Natural killer cell (primary cell): ENCODE measurements at regions of chr11 and their contacts with region 1.

Region 1: DNA sequence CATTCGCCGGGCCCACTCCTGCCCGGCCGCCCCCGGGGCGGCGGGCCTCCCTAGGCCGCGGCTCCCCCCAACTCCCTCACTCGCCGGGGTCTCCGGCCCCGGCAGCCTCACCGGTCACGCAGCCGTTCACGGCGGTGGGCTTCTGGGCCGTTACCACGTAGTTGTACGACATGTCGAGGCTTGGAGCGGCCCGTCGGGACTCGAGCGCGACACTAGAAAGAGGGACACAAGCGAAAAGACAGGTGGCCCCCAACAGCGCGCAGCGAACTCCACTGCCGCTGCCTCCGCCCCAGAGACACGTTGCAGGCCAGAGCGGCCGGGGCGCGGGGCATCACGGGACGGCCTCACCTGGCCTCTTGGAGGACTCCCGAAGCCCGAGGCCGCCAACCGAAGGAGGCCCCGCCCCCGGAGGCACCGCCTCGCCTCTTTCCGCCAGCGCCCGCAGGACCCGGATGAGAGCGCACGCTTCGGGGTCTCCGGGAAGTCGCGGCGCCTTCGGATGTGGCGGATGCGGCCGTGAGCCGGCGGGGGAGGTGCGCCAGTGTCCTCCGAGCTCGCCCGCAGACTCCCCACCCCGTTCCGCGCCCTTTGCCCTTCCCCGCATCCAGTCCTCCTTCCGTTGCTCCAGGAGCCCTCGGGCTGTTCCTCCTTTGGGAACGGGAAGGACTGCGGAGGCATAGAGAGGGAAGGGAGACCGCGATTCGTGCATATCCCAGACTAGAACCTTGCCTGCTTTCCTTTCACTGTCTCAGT is at the starts of genes DDB1 and TKFC:
- DNase-seq: peak; percentile 92 to 97
- ATAC-seq: peak; percentile 90 to 95 (median 94)
- H3K4me3 ChIP-seq: peak within 1 kb of the TSS; percentile 71
- H3K4me3 Mint-ChIP-seq: peak within 1 kb of the TSS; percentile 87
- H3K27ac ChIP-seq: peak within 1 kb of the TSS; percentile 77
- H3K27ac Mint-ChIP-seq: peak within 1 kb of the TSS; percentile 85 to 95
- H3K4me1 ChIP-seq: peaks cover 36% of the 10 kb centered on the region
- H3K4me1 Mint-ChIP-seq: peaks cover 35 to 56% of the 10 kb centered on the region in 2 donors
- H3K27me3 ChIP-seq: no peaks in the 10 kb centered on the region
- H3K27me3 Mint-ChIP-seq: no peaks in the 10 kb centered on the region
- CTCF ChIP-seq: no peak
- total RNA-seq, gene DDB1: 170 to 233 (median 229) TPM
- total RNA-seq, gene TKFC: 32.9 to 54.8 (median 38.6) TPM

Region 2: GRCh38 chr11:61309739-61310138 is 23.2 kb before region 1 on chr11:
- intact Hi-C with region 1: no loop called
- DNase-seq: no peak
- ATAC-seq: no peak
- H3K4me3 ChIP-seq: no peak overlapping the region
- H3K4me3 Mint-ChIP-seq: no peak overlapping the region
- H3K27ac ChIP-seq: no peak overlapping the region
- H3K27ac Mint-ChIP-seq: no peak overlapping the region
- H3K4me1 ChIP-seq: no peaks in the 10 kb centered on the region
- H3K4me1 Mint-ChIP-seq: no peaks in the 10 kb centered on the region
- H3K27me3 ChIP-seq: no peaks in the 10 kb centered on the region
- H3K27me3 Mint-ChIP-seq: no peaks in the 10 kb centered on the region
- CTCF ChIP-seq: no peak

Region 3: GRCh38 chr11:61361686-61362541 is 28.9 kb after region 1 on chr11 and contains the starts of genes CYB561A3 and TMEM138:
- intact Hi-C with region 1: loop called (anchors 1 kb)
- DNase-seq: peak; percentile 80 to 91
- ATAC-seq: peak; percentile 92 to 99 (median 93)
- H3K4me3 ChIP-seq: peak within 1 kb of the TSS; percentile 90
- H3K4me3 Mint-ChIP-seq: peak within 1 kb of the TSS; percentile 99
- H3K27ac ChIP-seq: peak within 1 kb of the TSS; percentile 96
- H3K27ac Mint-ChIP-seq: peak within 1 kb of the TSS; percentile 94 to 98
- H3K4me1 ChIP-seq: peaks cover 42% of the 10 kb centered on the region
- H3K4me1 Mint-ChIP-seq: peaks cover 21 to 26% of the 10 kb centered on the region in 2 donors
- H3K27me3 ChIP-seq: no peaks in the 10 kb centered on the region
- H3K27me3 Mint-ChIP-seq: no peaks in the 10 kb centered on the region
- CTCF ChIP-seq: no peak
- total RNA-seq, gene CYB561A3: 24.6 to 33.5 (median 30.2) TPM
- total RNA-seq, gene TMEM138: 63.8 to 75.9 (median 66.5) TPM

Region 4: DNA sequence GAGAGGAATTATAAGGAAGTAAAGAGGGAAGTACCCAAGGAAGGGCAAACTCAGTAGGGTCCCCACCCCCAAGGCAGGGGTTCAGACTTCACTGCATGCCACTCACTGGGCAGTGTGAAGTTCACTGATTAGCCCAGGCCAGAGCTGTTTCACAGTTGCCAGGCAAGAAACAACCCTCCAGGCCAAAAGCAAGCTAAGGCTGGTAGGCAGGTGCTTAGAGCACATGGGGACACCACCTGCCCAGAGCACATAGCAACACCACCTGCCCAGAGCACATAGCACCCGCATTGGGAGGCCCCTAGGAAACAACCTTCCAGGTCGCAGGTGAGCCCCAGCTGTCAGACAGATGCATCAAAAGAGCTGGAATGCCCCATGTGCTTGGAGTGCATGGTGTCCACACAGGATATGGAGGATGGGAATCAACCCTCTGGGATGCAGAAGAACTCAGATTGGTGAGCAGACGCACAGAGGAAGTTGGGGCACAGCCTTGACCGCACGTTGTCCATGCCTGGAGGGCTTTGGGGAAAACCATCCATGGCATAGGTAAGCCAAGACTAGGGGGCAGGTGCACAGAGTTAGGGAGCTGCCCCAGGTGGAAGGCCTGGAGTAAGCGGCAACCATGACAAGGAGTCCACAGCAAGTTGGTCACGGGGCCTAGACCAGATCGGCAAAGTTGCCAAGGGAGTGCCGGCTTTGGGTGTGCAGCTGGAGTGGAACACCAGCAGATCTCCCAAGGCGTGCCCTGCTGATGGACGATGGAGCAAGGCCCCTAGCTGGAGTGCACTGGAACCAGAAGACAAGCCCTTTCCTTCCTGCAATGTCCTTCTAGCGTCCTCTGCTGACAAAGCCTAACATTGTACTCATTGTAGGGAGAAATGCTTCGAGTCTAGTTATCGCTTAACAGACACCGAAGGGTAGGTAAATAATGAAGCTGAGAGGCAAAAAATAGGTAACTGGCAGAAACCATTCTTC is 51.6 kb after region 1 on chr11:
- intact Hi-C with region 1: loop called (anchors 1 kb)
- DNase-seq: no peak
- ATAC-seq: no peak
- H3K4me3 ChIP-seq: no peak overlapping the region
- H3K4me3 Mint-ChIP-seq: no peak overlapping the region
- H3K27ac ChIP-seq: no peak overlapping the region
- H3K27ac Mint-ChIP-seq: no peak overlapping the region
- H3K4me1 ChIP-seq: peaks cover 5% of the 10 kb centered on the region
- H3K4me1 Mint-ChIP-seq: peaks cover 7 to 8% of the 10 kb centered on the region in 2 donors
- H3K27me3 ChIP-seq: no peaks in the 10 kb centered on the region
- H3K27me3 Mint-ChIP-seq: no peaks in the 10 kb centered on the region
- CTCF ChIP-seq: no peak

Region 5: DNA sequence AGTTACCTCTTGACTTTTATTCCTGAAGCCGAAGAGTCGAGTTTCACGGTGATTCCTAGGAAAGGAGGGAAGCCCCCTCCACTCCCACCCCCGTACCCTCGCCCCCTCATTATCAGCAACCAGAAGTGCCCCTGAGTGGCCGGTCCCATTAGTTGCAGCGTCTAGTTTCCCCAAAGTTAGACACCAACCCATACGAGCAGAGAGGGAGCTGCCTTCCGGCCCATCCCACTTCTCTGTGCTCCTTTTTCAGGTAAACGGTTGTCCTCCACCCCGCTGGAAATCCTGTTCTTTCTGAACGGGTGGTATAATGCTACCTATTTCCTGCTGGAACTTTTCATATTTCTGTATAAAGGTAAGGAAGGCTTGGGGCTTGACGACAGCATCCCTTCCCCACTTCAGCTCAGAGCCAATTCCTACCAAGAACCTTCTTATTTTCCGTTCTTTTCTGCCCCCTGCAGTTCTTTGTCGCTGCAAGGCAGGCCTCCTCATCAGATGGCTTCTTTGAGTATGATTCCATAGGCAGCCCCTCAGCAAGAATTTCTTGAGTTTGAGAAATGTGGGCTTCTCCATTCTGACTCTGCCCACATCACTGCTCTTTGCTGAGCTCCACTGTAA is 60.1 kb after region 1 on chr11:
- intact Hi-C with region 1: loop called (anchors 2 kb)
- DNase-seq: peak in 1 of 2 donors; percentile 59
- ATAC-seq: peak in 2 of 3 donors; percentile 12 to 23
- H3K4me3 ChIP-seq: peak overlapping the region; percentile 80
- H3K4me3 Mint-ChIP-seq: peak overlapping the region; percentile 92
- H3K27ac ChIP-seq: peak overlapping the region; percentile 81
- H3K27ac Mint-ChIP-seq: peak overlapping the region; percentile 87 to 94
- H3K4me1 ChIP-seq: peaks cover 21% of the 10 kb centered on the region
- H3K4me1 Mint-ChIP-seq: peaks cover 25% of the 10 kb centered on the region in 2 donors
- H3K27me3 ChIP-seq: no peaks in the 10 kb centered on the region
- H3K27me3 Mint-ChIP-seq: no peaks in the 10 kb centered on the region
- CTCF ChIP-seq: no peak

Region 6: DNA sequence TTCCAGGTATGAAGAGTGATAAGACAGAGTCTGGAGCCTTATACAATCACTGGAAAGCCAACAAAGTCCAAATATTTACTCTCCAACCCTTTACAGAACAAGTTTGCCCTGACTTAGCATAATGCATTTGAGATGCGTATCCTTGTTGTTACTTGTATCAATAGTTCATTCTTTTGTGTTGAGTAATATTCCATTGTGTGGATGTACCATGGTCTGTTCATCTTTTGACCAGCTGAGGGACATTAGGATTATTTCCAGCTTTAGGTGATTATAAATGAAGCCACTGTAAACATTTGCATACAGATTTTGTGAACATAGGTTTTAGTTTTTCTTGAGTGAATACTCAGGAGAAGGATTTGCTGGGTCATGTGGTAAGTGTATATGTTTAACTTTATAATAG is 106.6 kb after region 1 on chr11:
- intact Hi-C with region 1: loop called (anchors 5 kb)
- DNase-seq: no peak
- ATAC-seq: no peak
- H3K4me3 ChIP-seq: no peak overlapping the region
- H3K4me3 Mint-ChIP-seq: no peak overlapping the region
- H3K27ac ChIP-seq: no peak overlapping the region
- H3K27ac Mint-ChIP-seq: no peak overlapping the region
- H3K4me1 ChIP-seq: peaks cover 8% of the 10 kb centered on the region
- H3K4me1 Mint-ChIP-seq: peaks cover 32 to 33% of the 10 kb centered on the region in 2 donors
- H3K27me3 ChIP-seq: no peaks in the 10 kb centered on the region
- H3K27me3 Mint-ChIP-seq: no peaks in the 10 kb centered on the region
- CTCF ChIP-seq: no peak